ENCODE measurements at regions of chr11 and their contacts with region 1.

Region 1: GRCh38 chr11:44036811-44037657 is 10.7 kb upstream of the ACCSL start:
- DNase-seq: peak; percentile 47 to 79 (median 63)
- ATAC-seq: peak; percentile 98
- H3K4me3 ChIP-seq: no peak overlapping the region
- H3K27ac ChIP-seq: no peak overlapping the region
- H3K4me1 ChIP-seq: peaks cover 0 to 2% of the 10 kb centered on the region in 2 experiments; a peak in 2 of 5 replicates
- H3K27me3 ChIP-seq: peaks cover 6 to 18% of the 10 kb centered on the region in 2 experiments; a peak in 4 of 5 replicates
- CTCF ChIP-seq: peak; percentile 87 to 92 (median 87)
- EP300 ChIP-seq: no peak
- POLR2A ChIP-seq: no peak
- RAD21 ChIP-seq: peak; percentile 82 to 88

Region 2: GRCh38 chr11:43664295-43664694 is 372.7 kb before region 1 on chr11:
- CTCF ChIA-PET with region 1: no interaction called
- POLR2A ChIA-PET with region 1: no interaction called
- in situ Hi-C with region 1: no loop called
- intact Hi-C with region 1: no loop called
- DNase-seq: no peak
- ATAC-seq: no peak
- H3K4me3 ChIP-seq: no peak overlapping the region
- H3K27ac ChIP-seq: no peak overlapping the region
- H3K4me1 ChIP-seq: no peaks in the 10 kb centered on the region; a peak in 2 of 5 replicates
- H3K27me3 ChIP-seq: no peaks in the 10 kb centered on the region
- CTCF ChIP-seq: no peak
- EP300 ChIP-seq: no peak
- POLR2A ChIP-seq: no peak
- RAD21 ChIP-seq: no peak

Region 3: DNA sequence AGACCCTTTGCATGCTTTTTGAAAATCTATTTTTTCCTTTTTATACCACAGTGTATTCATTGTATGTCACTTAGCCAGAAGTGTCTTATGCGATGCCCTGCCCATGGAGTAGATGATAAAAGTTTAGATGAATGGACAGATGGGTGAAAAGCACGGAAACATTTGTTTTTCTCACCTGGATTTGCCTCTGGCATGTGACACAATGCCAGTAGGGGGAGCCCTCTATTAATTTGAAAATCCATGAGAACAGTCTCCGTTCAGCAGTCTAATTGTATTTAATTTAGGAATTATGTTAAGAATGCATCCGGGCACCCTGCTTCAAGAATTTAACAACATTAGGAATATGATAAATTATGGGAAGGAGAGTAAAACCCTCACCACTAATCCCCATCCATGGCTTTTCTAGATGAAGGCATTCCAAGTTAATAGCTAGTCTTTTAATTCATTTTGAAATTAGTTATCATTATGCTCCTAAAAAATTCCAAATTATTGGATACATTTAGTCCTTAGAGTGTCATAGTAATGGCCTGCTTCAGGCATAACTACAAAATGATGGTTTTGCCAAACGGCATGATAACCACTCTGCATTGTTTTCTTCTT is 211.7 kb before region 1 on chr11:
- CTCF ChIA-PET with region 1: no interaction called
- POLR2A ChIA-PET with region 1: no interaction called
- in situ Hi-C with region 1: no loop called
- intact Hi-C with region 1: loop called (anchors 1 kb)
- DNase-seq: peak; percentile 13 to 56 (median 16)
- ATAC-seq: peak; percentile 80
- H3K4me3 ChIP-seq: no peak overlapping the region
- H3K27ac ChIP-seq: no peak overlapping the region
- H3K4me1 ChIP-seq: no peaks in the 10 kb centered on the region
- H3K27me3 ChIP-seq: no peaks in the 10 kb centered on the region
- CTCF ChIP-seq: peak; percentile 56 to 77 (median 75); a peak in 5 of 6 replicates
- EP300 ChIP-seq: no peak
- POLR2A ChIP-seq: no peak
- RAD21 ChIP-seq: peak; percentile 51 to 65

Region 4: GRCh38 chr11:43895601-43896000 is 141.4 kb before region 1 on chr11:
- CTCF ChIA-PET with region 1: interaction called, 12 read pairs
- POLR2A ChIA-PET with region 1: no interaction called
- in situ Hi-C with region 1: loop called (anchors 5 kb)
- intact Hi-C with region 1: loop called (anchors 1 kb)
- DNase-seq: no peak
- ATAC-seq: no peak
- H3K4me3 ChIP-seq: no peak overlapping the region
- H3K27ac ChIP-seq: no peak overlapping the region
- H3K4me1 ChIP-seq: no peaks in the 10 kb centered on the region
- H3K27me3 ChIP-seq: no peaks in the 10 kb centered on the region
- CTCF ChIP-seq: no peak
- EP300 ChIP-seq: no peak
- POLR2A ChIP-seq: no peak
- RAD21 ChIP-seq: no peak

Measured in K562 (cell line).